ENCODE measurements at regions of chr14 and their contacts with region 1.

Region 1: DNA sequence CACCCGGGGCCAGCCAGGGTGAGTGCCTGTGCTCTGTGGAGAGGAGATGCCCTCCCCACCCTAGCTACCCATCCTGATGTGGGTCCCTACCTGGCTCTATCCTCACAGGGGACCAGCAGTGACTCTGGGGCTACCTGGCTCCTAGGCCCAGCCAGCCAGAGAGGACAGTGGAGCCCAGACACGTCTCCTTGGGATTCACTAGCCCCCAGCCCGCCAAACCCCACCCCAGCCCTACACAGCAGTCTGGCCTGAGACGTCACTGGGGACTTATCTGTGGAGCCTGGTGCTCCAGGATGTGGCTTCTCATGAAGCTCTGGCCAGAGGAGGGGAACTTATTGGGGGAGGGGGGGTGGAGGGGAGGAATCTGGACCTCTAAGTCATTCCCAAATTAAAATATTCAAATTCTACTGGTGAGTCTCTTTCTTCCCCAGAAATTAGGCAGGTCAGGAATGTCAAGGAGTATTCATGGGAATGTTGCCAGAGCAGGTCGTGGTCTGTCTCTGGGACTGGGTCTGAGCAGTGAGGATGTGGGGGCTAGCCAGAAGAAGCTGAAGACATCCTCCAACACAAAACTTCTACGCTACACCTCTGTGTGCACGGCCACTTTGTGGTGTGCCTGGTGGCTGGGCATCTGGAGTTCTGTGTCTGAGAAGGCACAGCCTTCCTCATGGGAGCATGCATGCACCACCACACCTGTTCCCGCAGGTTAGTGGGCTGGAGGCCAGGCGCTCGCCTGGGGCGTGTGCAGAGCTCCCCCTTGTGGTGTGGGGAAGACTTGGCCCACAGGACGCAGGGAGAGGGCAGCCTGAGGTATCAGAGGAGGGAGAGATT is 2.7 kb downstream of the CMTM5 start:
- DNase-seq: peak; percentile 64
- H3K4me3 Mint-ChIP-seq: no peak overlapping the region
- H3K27ac Mint-ChIP-seq: no peak overlapping the region
- H3K4me1 Mint-ChIP-seq: no peaks in the 10 kb centered on the region
- H3K27me3 Mint-ChIP-seq: peaks cover 66% of the 10 kb centered on the region
- CTCF ChIP-seq: peak; percentile 93

Region 2: DNA sequence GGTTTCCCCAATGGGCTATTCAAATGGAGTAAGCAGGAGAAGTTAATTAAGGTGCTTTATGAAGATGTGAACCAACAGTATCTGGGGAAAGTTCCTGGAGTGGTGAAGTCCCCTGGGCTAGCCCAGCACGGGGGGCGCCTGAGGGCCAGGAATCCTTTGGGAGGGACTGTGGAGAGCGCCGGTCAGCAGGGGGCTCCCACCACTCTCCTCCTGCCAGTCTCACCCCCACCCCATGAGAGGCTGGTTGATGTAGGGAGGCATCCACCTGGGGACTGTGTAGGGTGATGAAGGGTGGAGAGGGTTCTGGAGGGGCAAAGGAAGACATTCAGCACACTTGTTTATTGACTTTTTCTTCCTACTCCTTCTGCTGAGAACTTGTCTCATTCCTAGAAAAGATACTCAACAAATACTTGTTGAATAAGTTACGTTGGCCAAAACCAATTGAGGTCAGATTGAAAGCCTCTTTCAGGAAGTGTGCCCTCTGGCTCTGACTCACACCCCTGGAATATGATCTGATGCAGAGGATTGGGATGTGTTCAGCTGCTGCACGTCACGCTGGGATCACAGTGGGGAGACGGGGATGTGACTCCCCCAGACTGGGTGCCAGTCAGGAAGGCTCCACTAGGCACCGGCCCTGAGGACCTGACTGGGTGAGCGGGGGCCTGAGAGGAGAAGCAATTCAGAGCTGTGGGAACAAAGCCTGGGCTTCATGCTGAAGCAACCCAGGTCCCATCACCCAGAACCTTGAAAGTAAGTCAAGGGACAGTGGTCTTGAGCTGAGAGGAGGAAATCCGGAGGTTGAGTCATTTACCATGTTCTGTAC is 264.7 kb before region 1 on chr14:
- CTCF ChIA-PET with region 1: no interaction called
- POLR2A ChIA-PET with region 1: no interaction called
- intact Hi-C with region 1: loop called (anchors 5 kb)
- DNase-seq: peak; percentile 87
- H3K4me3 Mint-ChIP-seq: no peak overlapping the region
- H3K27ac Mint-ChIP-seq: peak overlapping the region; percentile 77
- H3K4me1 Mint-ChIP-seq: peaks cover 16% of the 10 kb centered on the region
- H3K27me3 Mint-ChIP-seq: no peaks in the 10 kb centered on the region
- CTCF ChIP-seq: no peak

Region 3: DNA sequence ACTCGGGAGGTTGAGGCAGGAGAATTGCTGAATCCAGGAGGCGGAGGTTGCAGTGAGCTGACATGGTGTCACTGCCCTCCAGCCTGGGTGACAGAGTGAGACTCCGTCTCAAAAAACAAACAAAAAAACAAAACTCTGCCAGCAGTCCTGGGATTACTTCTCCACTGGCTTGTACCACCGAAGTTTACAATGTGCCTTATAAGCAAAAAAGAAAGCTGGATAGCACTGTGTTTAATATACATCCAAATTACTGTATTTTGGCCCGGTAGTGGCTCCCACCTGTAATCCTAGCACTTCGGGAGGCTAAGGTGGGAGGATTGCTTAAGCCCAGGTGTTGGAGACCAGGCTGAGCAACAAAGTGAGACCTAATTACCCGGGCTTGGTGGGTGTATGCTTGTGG is 110.4 kb before region 1 on chr14:
- CTCF ChIA-PET with region 1: interaction called, 19 read pairs
- POLR2A ChIA-PET with region 1: interaction called, 3 read pairs
- intact Hi-C with region 1: loop called (anchors 1 kb)
- DNase-seq: no peak
- H3K4me3 Mint-ChIP-seq: no peak overlapping the region
- H3K27ac Mint-ChIP-seq: no peak overlapping the region
- H3K4me1 Mint-ChIP-seq: no peaks in the 10 kb centered on the region
- H3K27me3 Mint-ChIP-seq: no peaks in the 10 kb centered on the region
- CTCF ChIP-seq: no peak

Region 4: GRCh38 chr14:23320774-23321571 is 58.6 kb before region 1 on chr14 and contains the start of gene PABPN1:
- CTCF ChIA-PET with region 1: interaction called, 62 read pairs
- POLR2A ChIA-PET with region 1: no interaction called
- intact Hi-C with region 1: no loop called
- DNase-seq: peak; percentile 100
- H3K4me3 Mint-ChIP-seq: peak within 1 kb of the TSS; percentile 84
- H3K27ac Mint-ChIP-seq: peak within 1 kb of the TSS; percentile 97
- H3K4me1 Mint-ChIP-seq: peaks cover 11% of the 10 kb centered on the region
- H3K27me3 Mint-ChIP-seq: no peaks in the 10 kb centered on the region
- CTCF ChIP-seq: no peak
- total RNA-seq, gene PABPN1: 153 and 167 TPM in 2 replicates

Region 5: GRCh38 chr14:23396781-23397407 is 17.3 kb after region 1 on chr14:
- CTCF ChIA-PET with region 1: interaction called, 74 read pairs
- POLR2A ChIA-PET with region 1: no interaction called
- intact Hi-C with region 1: no loop called
- DNase-seq: no peak
- H3K4me3 Mint-ChIP-seq: no peak overlapping the region
- H3K27ac Mint-ChIP-seq: no peak overlapping the region
- H3K4me1 Mint-ChIP-seq: no peaks in the 10 kb centered on the region
- H3K27me3 Mint-ChIP-seq: peaks cover 44% of the 10 kb centered on the region
- CTCF ChIP-seq: no peak

Region 6: GRCh38 chr14:23530375-23531055 is 150.9 kb after region 1 on chr14:
- CTCF ChIA-PET with region 1: no interaction called
- POLR2A ChIA-PET with region 1: no interaction called
- intact Hi-C with region 1: no loop called
- DNase-seq: no peak
- H3K4me3 Mint-ChIP-seq: no peak overlapping the region
- H3K27ac Mint-ChIP-seq: no peak overlapping the region
- H3K4me1 Mint-ChIP-seq: no peaks in the 10 kb centered on the region
- H3K27me3 Mint-ChIP-seq: no peaks in the 10 kb centered on the region
- CTCF ChIP-seq: no peak

Measured in MCF 10A (cell line).